ENCODE measurements at regions of chr7 and their contacts with region 1.

Region 1: DNA sequence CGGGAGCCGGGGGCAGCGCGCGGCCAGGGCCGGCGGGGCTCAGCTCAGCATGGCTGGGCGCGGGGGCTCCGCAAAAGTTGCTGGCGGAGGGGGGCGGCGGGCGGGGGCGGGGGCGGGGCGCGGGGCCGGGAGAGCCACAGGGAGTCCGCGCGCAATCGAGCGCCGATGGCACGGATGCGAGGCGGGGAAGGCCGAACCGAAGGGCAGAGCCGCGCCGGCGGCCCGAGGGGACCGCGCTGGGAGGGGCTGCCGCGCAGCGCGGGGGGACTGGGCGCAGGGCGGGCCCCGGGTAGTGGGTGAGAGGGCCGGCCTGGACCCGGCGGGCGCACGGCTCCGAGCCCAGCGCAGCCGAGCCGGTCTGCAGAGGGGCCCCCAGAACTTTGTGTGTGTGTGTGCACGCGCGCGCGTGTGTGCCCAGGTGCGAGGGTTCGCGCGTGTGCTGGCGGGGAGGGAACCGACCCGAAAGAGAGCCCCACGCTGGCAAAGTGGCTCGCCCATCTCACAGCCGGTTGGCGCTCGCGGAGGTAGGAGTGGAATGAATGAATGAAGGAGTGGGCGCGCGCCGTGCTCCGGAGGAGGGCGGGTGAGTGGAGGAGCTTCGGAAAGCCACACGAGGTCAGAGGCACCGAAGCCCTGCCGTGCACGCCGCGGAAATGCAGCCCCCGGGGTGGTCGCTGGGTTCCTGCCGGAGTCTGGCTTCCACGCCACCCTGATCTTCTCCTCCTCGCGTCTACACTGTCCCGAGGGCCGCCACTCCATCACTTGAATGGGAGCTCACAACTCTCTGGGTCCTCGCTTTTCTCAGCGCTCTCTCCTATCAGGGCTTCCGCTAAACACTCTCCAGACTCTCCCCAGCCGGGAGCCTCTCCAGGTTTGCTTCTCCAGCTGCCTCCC is at the start of gene HIPK2:
- DNase-seq: peak; percentile 40 to 84 (median 72)
- ATAC-seq: peak; percentile 60
- H3K4me3 ChIP-seq: peak within 1 kb of the TSS; percentile 73
- H3K4me3 Mint-ChIP-seq: peak within 1 kb of the TSS; percentile 98
- H3K27ac ChIP-seq: peak within 1 kb of the TSS; percentile 62 to 70
- H3K27ac Mint-ChIP-seq: peak within 1 kb of the TSS; percentile 96
- H3K4me1 ChIP-seq: peaks cover 35% of the 10 kb centered on the region
- H3K4me1 Mint-ChIP-seq: peaks cover 45% of the 10 kb centered on the region
- H3K27me3 ChIP-seq: no peaks in the 10 kb centered on the region
- H3K27me3 Mint-ChIP-seq: peaks cover 5% of the 10 kb centered on the region
- CTCF ChIP-seq: no peak
- total RNA-seq, gene HIPK2: 19.8 to 21.3 TPM

Region 2: DNA sequence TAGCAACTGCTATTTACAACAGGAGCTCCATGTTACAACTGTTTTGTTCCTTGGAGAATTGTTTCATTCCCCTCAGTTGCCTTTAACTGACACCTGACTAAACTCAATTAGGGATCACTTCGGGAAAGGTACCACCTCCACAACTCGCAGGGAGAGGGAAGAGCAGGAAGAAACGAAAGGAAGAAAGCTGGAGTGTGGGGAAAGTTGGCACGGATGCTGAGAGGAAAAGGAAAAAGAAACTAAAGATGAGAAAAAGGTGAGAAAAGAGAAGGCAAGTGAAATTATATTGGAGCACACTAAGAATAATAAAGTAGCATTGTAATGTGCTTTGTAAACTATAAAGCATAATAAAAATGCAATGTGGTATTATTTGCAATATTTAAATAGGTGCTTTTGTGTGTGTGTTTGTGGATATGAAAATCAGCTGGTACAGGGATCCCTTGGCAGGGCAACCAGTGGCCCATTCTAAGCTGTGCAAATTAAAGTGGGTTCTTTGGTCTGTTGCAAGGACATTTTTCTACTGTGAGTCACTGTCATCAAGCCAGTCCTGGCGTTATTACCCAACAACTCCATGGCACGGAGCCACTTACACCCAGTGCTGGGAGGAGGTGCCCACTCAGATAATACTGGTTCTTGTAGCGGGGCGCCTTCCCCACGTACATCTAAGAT is 46.3 kb before region 1 on chr7:
- CTCF ChIA-PET with region 1: interaction called, 3 read pairs
- POLR2A ChIA-PET with region 1: no interaction called
- intact Hi-C with region 1: loop called in 1 of 2 experiments (anchors 5 kb)
- DNase-seq: peak in 1 of 9 experiments; percentile 28
- ATAC-seq: no peak
- H3K4me3 ChIP-seq: no peak overlapping the region
- H3K4me3 Mint-ChIP-seq: no peak overlapping the region
- H3K27ac ChIP-seq: no peak overlapping the region
- H3K27ac Mint-ChIP-seq: no peak overlapping the region
- H3K4me1 ChIP-seq: peaks cover 18% of the 10 kb centered on the region
- H3K4me1 Mint-ChIP-seq: peaks cover 58% of the 10 kb centered on the region
- H3K27me3 ChIP-seq: no peaks in the 10 kb centered on the region
- H3K27me3 Mint-ChIP-seq: no peaks in the 10 kb centered on the region
- CTCF ChIP-seq: no peak

Region 3: GRCh38 chr7:139829025-139829774 is 51.0 kb after region 1 on chr7 and contains the start of gene TBXAS1:
- CTCF ChIA-PET with region 1: no interaction called
- POLR2A ChIA-PET with region 1: no interaction called
- intact Hi-C with region 1: loop called in 1 of 2 experiments (anchors 5 kb)
- DNase-seq: peak in 1 of 9 experiments; percentile 20
- ATAC-seq: no peak
- H3K4me3 ChIP-seq: no peak within 1 kb of the TSS
- H3K4me3 Mint-ChIP-seq: peak within 1 kb of the TSS; percentile 59
- H3K27ac ChIP-seq: peak within 1 kb of the TSS in 1 of 2 experiments; percentile 48
- H3K27ac Mint-ChIP-seq: peak within 1 kb of the TSS; percentile 76
- H3K4me1 ChIP-seq: no peaks in the 10 kb centered on the region
- H3K4me1 Mint-ChIP-seq: peaks cover 20% of the 10 kb centered on the region
- H3K27me3 ChIP-seq: no peaks in the 10 kb centered on the region
- H3K27me3 Mint-ChIP-seq: peaks cover 3% of the 10 kb centered on the region
- CTCF ChIP-seq: no peak
- total RNA-seq, gene TBXAS1: 0.43 to 0.97 TPM

Region 4: GRCh38 chr7:140062528-140063299 is 284.5 kb after region 1 on chr7 and contains the start of gene PARP12:
- CTCF ChIA-PET with region 1: no interaction called
- POLR2A ChIA-PET with region 1: no interaction called
- intact Hi-C with region 1: loop called in 1 of 2 experiments (anchors 5 kb)
- DNase-seq: peak; percentile 78 to 94 (median 87)
- ATAC-seq: peak; percentile 76
- H3K4me3 ChIP-seq: peak within 1 kb of the TSS; percentile 68 to 86
- H3K4me3 Mint-ChIP-seq: peak within 1 kb of the TSS; percentile 95
- H3K27ac ChIP-seq: peak within 1 kb of the TSS; percentile 82
- H3K27ac Mint-ChIP-seq: peak within 1 kb of the TSS; percentile 94
- H3K4me1 ChIP-seq: peaks cover 34% of the 10 kb centered on the region
- H3K4me1 Mint-ChIP-seq: peaks cover 42% of the 10 kb centered on the region
- H3K27me3 ChIP-seq: no peaks in the 10 kb centered on the region
- H3K27me3 Mint-ChIP-seq: no peaks in the 10 kb centered on the region
- CTCF ChIP-seq: no peak
- total RNA-seq, gene PARP12: 70.3 to 85.5 TPM

Region 5: DNA sequence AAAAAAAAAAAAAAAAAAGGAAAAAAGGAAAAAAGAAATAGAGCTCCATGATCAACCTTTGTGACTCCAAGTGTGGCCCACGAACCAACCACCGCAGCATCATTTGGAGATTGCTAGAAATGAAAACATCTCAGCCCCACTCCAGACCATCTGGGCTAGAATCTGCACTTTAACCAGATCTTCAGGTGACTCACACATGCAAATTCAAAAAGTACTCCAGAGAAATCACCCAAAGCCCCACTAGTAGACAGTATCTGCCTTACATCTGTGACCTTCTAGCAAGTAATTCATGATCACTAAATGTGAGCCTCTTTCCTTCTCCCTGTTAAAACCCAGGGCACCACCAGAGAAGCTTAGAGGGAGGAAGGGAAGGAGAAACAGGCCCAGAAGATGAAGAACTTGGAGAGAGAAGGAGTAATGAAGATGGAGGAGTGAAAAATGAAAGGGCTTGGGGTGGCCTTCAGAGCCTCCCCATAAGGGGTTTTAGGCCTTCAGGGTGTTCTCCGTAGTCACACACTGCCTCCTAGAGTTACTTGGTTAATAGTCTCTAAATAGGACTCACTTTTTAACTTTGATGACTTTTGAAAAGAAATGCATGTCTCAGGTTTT is 526.1 kb after region 1 on chr7:
- CTCF ChIA-PET with region 1: no interaction called
- POLR2A ChIA-PET with region 1: no interaction called
- intact Hi-C with region 1: loop called (anchors 10 kb)
- DNase-seq: peak in 8 of 9 experiments; percentile 11 to 80 (median 46)
- ATAC-seq: peak; percentile 96
- H3K4me3 ChIP-seq: no peak overlapping the region
- H3K4me3 Mint-ChIP-seq: no peak overlapping the region
- H3K27ac ChIP-seq: peak overlapping the region in 1 of 2 experiments; percentile 17
- H3K27ac Mint-ChIP-seq: peak overlapping the region; percentile 87
- H3K4me1 ChIP-seq: peaks cover 5% of the 10 kb centered on the region
- H3K4me1 Mint-ChIP-seq: peaks cover 5% of the 10 kb centered on the region
- H3K27me3 ChIP-seq: no peaks in the 10 kb centered on the region
- H3K27me3 Mint-ChIP-seq: no peaks in the 10 kb centered on the region
- CTCF ChIP-seq: peak; percentile 60

Region 6: DNA sequence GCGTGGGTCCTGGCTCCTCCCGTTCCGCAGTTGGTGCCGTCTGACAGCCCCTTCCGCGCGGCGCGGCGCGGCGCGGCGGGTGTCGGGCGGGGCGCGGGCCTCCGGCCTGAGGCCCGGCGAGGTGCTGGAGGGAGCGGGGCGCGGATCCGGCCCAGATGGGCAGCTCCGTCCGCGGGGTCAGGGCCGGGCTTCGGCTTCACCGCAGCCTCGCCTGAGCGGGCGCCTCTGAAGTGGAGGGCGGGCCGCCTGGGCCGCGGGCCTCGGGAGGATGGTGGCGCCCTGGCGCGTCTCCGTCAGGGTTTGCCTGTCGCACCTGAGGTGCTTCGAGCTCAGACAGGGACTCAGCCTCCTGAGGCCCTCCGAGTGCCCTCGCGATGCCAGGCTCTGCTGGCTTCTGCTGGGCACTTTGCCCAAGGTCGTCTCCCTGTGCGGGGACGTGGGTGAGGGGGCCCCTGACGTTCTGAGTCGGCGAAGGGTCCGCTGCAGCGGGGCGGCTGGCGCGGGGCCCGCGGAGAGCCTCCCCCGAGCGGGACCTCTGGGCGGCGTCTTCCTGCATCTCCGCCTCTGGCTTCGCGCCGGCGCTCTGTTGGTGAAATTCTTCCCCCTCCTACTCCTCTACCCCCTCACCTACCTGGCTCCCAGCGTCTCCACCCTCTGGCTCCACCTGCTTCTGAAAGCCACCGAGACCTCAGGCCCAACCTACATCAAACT is 895.0 kb after region 1 on chr7:
- CTCF ChIA-PET with region 1: no interaction called
- POLR2A ChIA-PET with region 1: no interaction called
- intact Hi-C with region 1: loop called in 1 of 2 experiments (anchors 10 kb)
- DNase-seq: peak; percentile 30 to 79 (median 65)
- ATAC-seq: peak; percentile 77
- H3K4me3 ChIP-seq: peak overlapping the region; percentile 56 to 64
- H3K4me3 Mint-ChIP-seq: peak overlapping the region; percentile 88
- H3K27ac ChIP-seq: peak overlapping the region; percentile 68 to 80
- H3K27ac Mint-ChIP-seq: peak overlapping the region; percentile 93
- H3K4me1 ChIP-seq: peaks cover 22% of the 10 kb centered on the region
- H3K4me1 Mint-ChIP-seq: peaks cover 41% of the 10 kb centered on the region
- H3K27me3 ChIP-seq: no peaks in the 10 kb centered on the region
- H3K27me3 Mint-ChIP-seq: no peaks in the 10 kb centered on the region
- CTCF ChIP-seq: no peak